GM12878 (cell line): ENCODE measurements at regions of chr10 and their contacts with region 1.

Region 1: GRCh38 chr10:77245953-77246352 is 391.7 kb downstream of the KCNMA1 start:
- DNase-seq: no peak
- ATAC-seq: no peak
- H3K4me3 ChIP-seq: no peak overlapping the region
- H3K27ac ChIP-seq: no peak overlapping the region
- H3K4me1 ChIP-seq: no peaks in the 10 kb centered on the region
- H3K27me3 ChIP-seq: no peaks in the 10 kb centered on the region
- CTCF ChIP-seq: no peak
- EP300 ChIP-seq: no peak
- POLR2A ChIP-seq: no peak
- RAD21 ChIP-seq: no peak

Region 2: GRCh38 chr10:77195101-77195500 is 50.9 kb before region 1 on chr10:
- CTCF ChIA-PET with region 1: interaction called, 5 read pairs
- POLR2A ChIA-PET with region 1: no interaction called
- RAD21 ChIA-PET with region 1: interaction called, 15 read pairs
- SMC1A ChIA-PET with region 1: interaction called, 3 read pairs
- in situ Hi-C with region 1: no loop called
- intact Hi-C with region 1: no loop called
- DNase-seq: no peak
- ATAC-seq: no peak
- H3K4me3 ChIP-seq: no peak overlapping the region
- H3K27ac ChIP-seq: no peak overlapping the region
- H3K4me1 ChIP-seq: no peaks in the 10 kb centered on the region; the same call in 1 of the 2 replicates
- H3K27me3 ChIP-seq: peaks cover 0 to 2% of the 10 kb centered on the region in 2 experiments; a peak in 1 of 4 replicates
- CTCF ChIP-seq: no peak
- EP300 ChIP-seq: no peak
- POLR2A ChIP-seq: no peak
- RAD21 ChIP-seq: no peak

Region 3: GRCh38 chr10:77230194-77230593 is 15.8 kb before region 1 on chr10:
- CTCF ChIA-PET with region 1: interaction called, 9 read pairs
- POLR2A ChIA-PET with region 1: interaction called, 4 read pairs
- RAD21 ChIA-PET with region 1: interaction called, 13 read pairs
- SMC1A ChIA-PET with region 1: interaction called, 17 read pairs
- in situ Hi-C with region 1: no loop called
- intact Hi-C with region 1: no loop called
- DNase-seq: no peak
- ATAC-seq: no peak
- H3K4me3 ChIP-seq: no peak overlapping the region
- H3K27ac ChIP-seq: no peak overlapping the region
- H3K4me1 ChIP-seq: peaks cover 4% of the 10 kb centered on the region
- H3K27me3 ChIP-seq: no peaks in the 10 kb centered on the region
- CTCF ChIP-seq: no peak
- EP300 ChIP-seq: no peak
- POLR2A ChIP-seq: no peak
- RAD21 ChIP-seq: no peak

Region 4: GRCh38 chr10:77478247-77478961 is 232.5 kb after region 1 on chr10:
- CTCF ChIA-PET with region 1: no interaction called
- POLR2A ChIA-PET with region 1: no interaction called
- RAD21 ChIA-PET with region 1: no interaction called
- SMC1A ChIA-PET with region 1: no interaction called
- in situ Hi-C with region 1: no loop called
- intact Hi-C with region 1: no loop called
- DNase-seq: no peak
- ATAC-seq: no peak
- H3K4me3 ChIP-seq: no peak overlapping the region
- H3K27ac ChIP-seq: no peak overlapping the region
- H3K4me1 ChIP-seq: no peaks in the 10 kb centered on the region
- H3K27me3 ChIP-seq: no peaks in the 10 kb centered on the region
- CTCF ChIP-seq: no peak
- EP300 ChIP-seq: no peak
- POLR2A ChIP-seq: no peak
- RAD21 ChIP-seq: no peak

Region 5: DNA sequence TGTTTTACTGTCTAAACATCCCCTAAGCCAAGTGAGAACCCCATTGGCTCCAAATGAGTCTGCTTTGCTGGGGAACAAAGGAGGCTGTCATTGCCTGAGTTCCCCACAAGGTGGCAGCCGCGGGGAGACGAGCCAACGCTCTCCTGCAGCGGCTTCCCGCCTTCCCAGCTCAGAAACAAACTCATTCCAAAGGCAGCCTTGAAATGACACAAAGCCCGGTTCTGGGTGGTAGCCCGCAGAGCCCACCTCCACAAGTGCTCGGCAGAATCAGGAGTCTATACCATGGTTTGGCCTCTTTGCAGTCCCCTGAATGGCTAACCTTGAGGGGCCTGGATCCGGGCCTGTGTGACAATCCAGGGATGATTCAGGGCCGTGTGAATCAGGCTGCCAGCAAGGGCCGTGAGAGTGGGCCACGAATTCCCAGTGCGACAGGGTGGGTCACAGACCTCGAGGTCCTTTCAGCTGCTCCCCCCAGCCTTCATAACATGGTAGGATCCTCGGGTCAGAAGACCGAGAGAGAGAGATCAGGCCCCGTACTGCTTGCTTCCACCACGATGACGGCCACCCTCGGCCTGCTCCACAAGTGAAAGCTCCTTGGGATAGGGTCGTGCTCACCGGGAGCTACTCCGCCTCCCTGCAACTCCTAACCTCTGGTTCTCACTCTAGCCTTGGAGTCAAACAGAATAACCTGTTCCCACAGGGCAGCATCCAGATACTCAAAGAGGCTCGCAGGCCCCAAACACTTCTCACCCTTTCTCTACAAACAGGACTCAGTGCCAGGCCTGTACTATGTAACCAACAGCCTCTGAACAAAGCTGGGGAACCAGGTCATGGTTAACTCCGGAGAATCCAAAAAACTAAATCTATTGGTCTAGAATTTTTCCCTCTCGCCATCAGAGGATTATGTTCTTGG is 601.0 kb after region 1 on chr10:
- CTCF ChIA-PET with region 1: no interaction called
- POLR2A ChIA-PET with region 1: no interaction called
- RAD21 ChIA-PET with region 1: no interaction called
- SMC1A ChIA-PET with region 1: no interaction called
- in situ Hi-C with region 1: no loop called
- intact Hi-C with region 1: no loop called
- DNase-seq: no peak
- ATAC-seq: peak; percentile 91
- H3K4me3 ChIP-seq: no peak overlapping the region
- H3K27ac ChIP-seq: no peak overlapping the region
- H3K4me1 ChIP-seq: peaks cover 9% of the 10 kb centered on the region
- H3K27me3 ChIP-seq: no peaks in the 10 kb centered on the region
- CTCF ChIP-seq: peak; percentile 93 to 96 (median 95)
- EP300 ChIP-seq: no peak
- POLR2A ChIP-seq: no peak
- RAD21 ChIP-seq: peak; percentile 76